ENCODE measurements at regions of chr11 and their contacts with region 1.

Region 1: DNA sequence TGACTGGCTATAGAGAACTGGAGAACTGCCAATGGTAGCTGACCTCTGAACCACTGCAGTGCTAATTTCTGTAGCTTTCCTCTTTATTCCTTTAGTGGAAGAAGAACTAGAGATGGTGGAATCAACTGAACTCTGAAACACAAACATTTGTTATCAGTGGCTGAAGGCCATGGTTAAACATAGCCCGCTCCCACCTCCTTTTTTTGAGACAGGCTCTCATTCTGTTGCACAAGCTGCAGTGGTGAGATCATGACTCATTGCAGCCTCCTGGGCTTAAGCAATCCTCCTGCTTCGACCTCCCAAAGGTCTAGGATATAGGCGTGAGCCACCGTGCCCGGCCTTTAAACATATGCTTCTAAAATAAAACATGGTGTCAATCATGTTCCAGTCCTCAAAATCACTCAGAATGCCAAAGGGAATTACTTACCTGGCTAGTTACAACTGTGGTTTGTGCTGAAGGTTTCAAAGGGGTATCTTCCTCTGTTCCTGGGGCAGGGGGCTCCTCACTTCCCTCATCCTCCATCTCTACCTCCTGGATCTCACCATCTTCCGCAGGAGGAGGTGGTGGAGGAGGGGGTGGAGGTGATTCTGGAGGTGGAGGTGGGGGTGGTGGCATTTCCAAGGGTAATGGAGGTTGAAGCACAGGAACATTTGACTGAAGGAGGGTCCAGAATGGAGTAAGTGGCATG is 9.0 kb upstream of the AGBL2 start:
- DNase-seq: no peak
- ATAC-seq: peak; percentile 45

Region 2: DNA sequence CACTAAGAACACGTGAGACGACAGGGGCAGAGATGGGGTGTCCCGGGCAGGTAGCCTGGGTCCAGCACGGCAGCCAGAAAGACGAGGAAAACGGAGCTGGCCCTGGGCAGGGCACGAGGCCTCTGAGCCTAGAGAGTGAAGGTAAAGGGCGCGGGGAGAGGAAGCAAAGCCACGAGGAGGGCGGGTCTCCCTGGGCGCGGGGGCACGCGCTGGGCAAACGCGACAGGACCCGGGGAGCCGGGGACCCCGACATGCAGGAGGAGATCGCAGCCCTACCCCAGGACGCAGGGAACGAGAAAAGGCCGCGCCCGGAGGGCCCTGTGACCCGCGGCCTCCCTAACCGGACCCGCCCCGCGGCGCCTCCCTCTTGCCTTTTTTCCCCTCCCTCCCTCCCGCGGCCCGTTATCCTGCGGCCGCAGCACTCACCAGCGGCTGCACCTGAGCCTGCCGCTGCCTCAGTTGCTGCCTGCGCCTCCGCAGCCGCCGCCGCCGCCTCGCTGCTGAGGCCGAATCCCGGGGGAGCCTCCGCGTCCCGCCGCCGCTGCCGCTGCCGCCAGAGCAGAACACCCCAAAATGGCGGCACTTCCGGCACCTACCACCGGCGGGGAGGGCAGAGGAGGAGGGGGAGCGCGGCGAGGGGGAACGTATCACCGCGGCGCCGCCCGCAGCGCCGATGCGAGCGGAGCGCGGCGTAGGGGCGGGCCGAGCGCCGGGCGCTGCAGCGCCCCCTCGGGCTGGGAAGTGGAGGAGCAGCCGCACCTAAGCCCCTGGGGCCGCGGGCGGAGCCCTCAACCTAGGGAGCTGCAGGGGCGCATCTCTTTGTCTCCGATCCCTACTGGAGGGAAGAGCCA is 171.4 kb before region 1 on chr11 and contains the start of gene CELF1:
- intact Hi-C with region 1: no loop called
- DNase-seq: peak; percentile 96
- ATAC-seq: peak; percentile 99
- total RNA-seq, gene CELF1: 96.2 TPM

Region 3: DNA sequence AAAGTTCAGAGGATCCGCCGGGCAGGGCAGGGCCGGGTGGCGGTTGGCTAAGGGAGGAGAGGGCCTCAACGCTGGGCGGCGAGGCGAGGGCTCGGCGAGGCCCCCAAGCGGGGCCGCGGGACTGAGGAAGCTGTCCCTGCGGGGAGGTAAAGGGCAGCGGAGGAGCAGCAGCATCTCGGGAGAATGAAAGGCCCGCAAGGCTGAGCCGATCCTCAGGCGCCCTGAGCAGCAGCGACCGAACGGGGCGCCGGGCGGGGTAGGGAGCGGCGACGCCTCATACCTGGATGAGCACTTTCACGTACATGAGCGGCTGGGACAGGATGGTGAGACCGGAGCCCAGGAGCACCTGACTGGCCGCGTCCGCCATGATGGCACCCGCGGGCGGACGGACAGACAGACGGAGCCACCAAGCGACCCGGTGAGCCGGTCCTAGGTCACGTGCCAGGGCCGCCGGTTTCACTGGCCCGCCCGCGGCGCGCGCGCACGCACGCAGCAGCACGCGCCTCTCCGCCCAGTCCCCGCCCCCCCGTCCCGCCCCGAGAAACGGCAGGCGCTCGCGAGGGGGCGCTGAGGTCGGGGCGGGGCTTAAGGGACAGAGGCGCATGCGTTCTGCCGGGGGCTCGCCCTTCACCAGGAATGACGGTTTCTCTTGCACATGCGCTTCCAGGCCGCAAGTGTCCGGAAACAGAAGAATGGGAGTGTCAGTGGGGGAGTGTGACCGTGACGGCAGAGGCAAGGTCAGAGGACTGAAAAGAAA is 81.9 kb before region 1 on chr11 and contains the start of gene MTCH2:
- intact Hi-C with region 1: loop called (anchors 5 kb)
- DNase-seq: peak; percentile 96
- ATAC-seq: peak; percentile 99
- total RNA-seq, gene MTCH2: 103 TPM